Spleen (tissue), 13 donors: ENCODE measurements at regions of chr3 and their contacts with region 1.

Region 1: DNA sequence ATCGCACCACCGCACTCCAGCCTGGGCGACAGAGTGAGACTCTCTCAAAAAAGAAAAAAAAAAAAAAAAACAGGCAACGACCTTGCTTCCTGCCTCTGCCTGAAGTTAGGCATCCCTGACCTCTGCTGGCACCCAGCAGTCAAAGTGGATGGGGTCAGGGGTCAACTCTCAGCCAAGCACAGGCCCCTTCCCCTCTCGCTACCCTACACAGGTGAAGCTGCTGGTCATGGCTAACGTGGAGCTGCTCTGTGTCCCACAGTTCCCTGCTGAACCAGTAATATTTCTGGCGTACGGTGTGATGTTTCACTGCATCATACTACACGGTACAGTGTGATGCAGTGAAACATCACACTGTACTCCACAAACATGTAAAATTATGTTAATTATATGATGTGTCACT is 13.9 kb upstream of the FRG2C start:
- DNase-seq: no peak
- H3K4me3 ChIP-seq: no peak overlapping the region
- H3K27ac ChIP-seq: no peak overlapping the region
- H3K4me1 ChIP-seq: no peaks in the 10 kb centered on the region
- H3K27me3 ChIP-seq: peaks cover 0 to 2% (median 0%) of the 10 kb centered on the region in 7 donors
- CTCF ChIP-seq: no peak
- POLR2A ChIP-seq: no peak

Region 2: GRCh38 chr3:75294124-75294523 is 356.1 kb before region 1 on chr3:
- intact Hi-C with region 1: loop called (anchors 10 kb)
- DNase-seq: no peak
- H3K4me3 ChIP-seq: no peak overlapping the region
- H3K27ac ChIP-seq: no peak overlapping the region
- H3K4me1 ChIP-seq: no peaks in the 10 kb centered on the region
- H3K27me3 ChIP-seq: peaks cover 0 to 3% (median 0%) of the 10 kb centered on the region in 7 donors
- CTCF ChIP-seq: peak; percentile 7 to 78 (median 56)
- POLR2A ChIP-seq: no peak